HEK293 (cell line): ENCODE measurements at regions of chr1 and their contacts with region 1.

Region 1: GRCh38 chr1:31955917-31956736 is 18.0 kb upstream of the PTP4A2 start:
- H3K4me3 ChIP-seq: no peak overlapping the region
- H3K27ac ChIP-seq: peak overlapping the region; percentile 20; the same call in 1 of the 2 replicates
- H3K4me1 ChIP-seq: peaks cover 7% of the 10 kb centered on the region; the same call in 1 of the 2 replicates
- CTCF ChIP-seq: 0 out of 2 replicates have a peak, but pooled peaks have one; percentile 18

Region 2: GRCh38 chr1:31944205-31945089 is 11.7 kb before region 1 on chr1:
- CTCF ChIA-PET with region 1: interaction called, 53 read pairs
- POLR2A ChIA-PET with region 1: interaction called, 17 read pairs
- H3K4me3 ChIP-seq: peak overlapping the region; percentile 44
- H3K27ac ChIP-seq: peak overlapping the region; percentile 76
- H3K4me1 ChIP-seq: peaks cover 1% of the 10 kb centered on the region; the same call in 1 of the 2 replicates
- CTCF ChIP-seq: no peak